ENCODE measurements at regions of chr3 and their contacts with region 1.

Region 1: DNA sequence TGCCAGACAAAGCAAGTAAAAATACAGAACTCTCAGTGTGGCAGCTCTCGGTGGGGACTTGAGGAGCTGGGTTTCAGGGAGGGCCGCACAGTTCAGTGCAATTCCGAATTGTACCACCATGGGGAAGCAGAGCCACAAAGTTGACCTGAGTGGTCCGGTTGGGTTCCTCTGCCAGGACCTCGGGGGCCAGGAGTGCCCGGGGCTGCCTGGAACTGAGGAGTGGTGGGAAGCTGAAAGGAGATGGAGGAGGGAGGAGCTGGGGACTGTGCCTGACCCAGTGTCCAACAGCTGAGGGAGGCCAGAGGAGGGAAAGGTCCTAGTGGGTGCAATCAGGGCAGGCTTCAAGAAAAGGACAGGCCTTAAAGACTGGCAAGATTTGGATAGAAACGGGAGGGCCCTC is 32.2 kb upstream of the TRH start:
- DNase-seq: peak; percentile 43 to 66 (median 57)
- ATAC-seq: peak; percentile 85 to 94 (median 87)
- H3K4me3 ChIP-seq: no peak overlapping the region
- H3K27ac ChIP-seq: no peak overlapping the region
- H3K4me1 ChIP-seq: peaks cover 0 to 3% (median 0%) of the 10 kb centered on the region in 12 donors
- H3K27me3 ChIP-seq: peaks cover 0 to 2% (median 0%) of the 10 kb centered on the region in 9 donors
- CTCF ChIP-seq: peak; percentile 62 to 76 (median 69)
- POLR2A ChIP-seq: no peak

Region 2: GRCh38 chr3:129195731-129196256 is 746.5 kb before region 1 on chr3:
- intact Hi-C with region 1: no loop called
- DNase-seq: peak in 4 of 5 donors; percentile 63 to 78 (median 64)
- ATAC-seq: peak; percentile 97
- H3K4me3 ChIP-seq: peak overlapping the region in 1 of 12 donors; percentile 10
- H3K27ac ChIP-seq: peak overlapping the region; percentile 78 to 95 (median 88)
- H3K4me1 ChIP-seq: peaks cover 12 to 39% (median 29%) of the 10 kb centered on the region in 12 donors
- H3K27me3 ChIP-seq: no peaks in the 10 kb centered on the region
- CTCF ChIP-seq: no peak
- POLR2A ChIP-seq: peak in 1 of 2 donors; percentile 25

Region 3: DNA sequence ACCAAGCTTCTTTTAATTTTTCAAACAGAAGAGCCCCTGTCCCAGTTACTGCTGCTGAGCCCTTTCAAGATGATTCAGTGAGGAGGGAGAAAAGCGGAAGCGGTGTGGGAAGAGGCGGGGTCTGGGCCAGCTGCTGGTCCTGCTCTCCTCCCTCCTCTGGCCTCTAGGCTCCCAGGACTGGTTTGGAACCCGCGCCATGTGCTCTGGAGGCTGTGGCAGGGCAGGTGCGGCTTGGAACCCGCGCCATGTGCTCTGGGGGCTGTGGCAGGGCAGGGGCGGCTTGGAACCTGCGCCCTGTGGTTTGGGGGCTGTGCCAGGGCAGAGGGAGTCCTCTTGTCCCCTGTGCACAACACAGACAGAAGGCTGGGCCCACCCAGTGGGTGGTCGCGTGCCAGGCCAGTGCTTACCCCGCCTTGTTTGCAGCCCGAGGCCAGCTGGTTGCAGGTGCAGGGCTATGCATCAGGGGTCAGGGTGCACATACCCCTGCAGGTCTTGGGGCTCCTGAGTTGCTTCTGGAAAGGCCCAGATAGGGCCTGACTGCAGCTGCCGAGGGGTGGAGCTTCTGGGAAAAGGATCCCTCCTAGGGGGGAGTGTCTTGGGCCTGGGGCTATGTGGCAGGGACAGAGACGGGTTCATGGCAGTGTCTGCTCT is 151.6 kb after region 1 on chr3:
- intact Hi-C with region 1: loop called in 5 of 10 experiments (anchors 2 to 10 kb)
- DNase-seq: no peak
- ATAC-seq: no peak
- H3K4me3 ChIP-seq: peak overlapping the region in 1 of 12 donors; percentile 28
- H3K27ac ChIP-seq: no peak overlapping the region
- H3K4me1 ChIP-seq: peaks cover 0 to 19% (median 0%) of the 10 kb centered on the region in 12 donors
- H3K27me3 ChIP-seq: no peaks in the 10 kb centered on the region
- CTCF ChIP-seq: no peak
- POLR2A ChIP-seq: no peak

Region 4: DNA sequence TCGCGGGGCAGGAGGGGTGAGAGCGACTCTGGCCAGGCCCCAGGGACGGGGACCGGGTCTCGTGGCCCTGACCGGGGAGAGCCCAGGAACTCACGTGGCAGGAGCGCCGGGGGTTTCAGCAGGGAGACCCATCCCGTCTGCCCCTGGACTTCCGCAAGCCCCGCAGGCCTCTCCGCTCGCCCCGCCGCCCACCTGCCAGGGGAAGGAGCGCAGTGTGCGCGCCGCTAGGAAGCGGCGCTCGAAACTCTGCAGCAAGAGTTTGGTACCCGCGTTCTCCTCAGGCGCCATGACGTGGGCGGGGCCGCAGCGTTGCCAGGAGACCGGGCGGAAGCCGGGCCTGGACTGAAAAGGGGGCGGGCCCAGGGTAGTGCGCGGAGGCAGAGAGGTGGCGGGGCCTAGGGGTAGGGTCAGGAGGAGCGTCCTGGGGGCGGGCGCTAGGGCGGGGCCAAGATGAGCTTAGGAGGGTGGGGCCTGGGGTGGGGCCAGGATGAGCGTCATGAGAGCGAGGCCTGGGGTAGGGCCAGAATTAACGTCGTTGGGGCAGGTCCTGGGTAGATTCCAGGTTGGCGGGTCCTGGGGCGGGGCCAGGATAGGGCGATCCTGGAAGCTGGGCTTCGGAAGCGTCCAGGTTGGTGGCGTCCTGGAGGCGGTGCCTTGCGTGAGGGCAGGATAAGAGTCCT is 169.0 kb after region 1 on chr3:
- intact Hi-C with region 1: loop called in 4 of 10 experiments (anchors 5 to 10 kb)
- DNase-seq: peak; percentile 99 to 100 (median 99)
- ATAC-seq: peak; percentile 100
- H3K4me3 ChIP-seq: peak overlapping the region; percentile 33 to 98 (median 77)
- H3K27ac ChIP-seq: peak overlapping the region in 11 of 12 donors; percentile 17 to 90 (median 78)
- H3K4me1 ChIP-seq: peaks cover 0 to 17% (median 4%) of the 10 kb centered on the region in 12 donors
- H3K27me3 ChIP-seq: no peaks in the 10 kb centered on the region
- CTCF ChIP-seq: no peak
- POLR2A ChIP-seq: peak in 1 of 2 donors; percentile 29

Region 5: GRCh38 chr3:130516645-130517512 is 574.6 kb after region 1 on chr3 and contains the start of gene COL6A6:
- intact Hi-C with region 1: no loop called
- DNase-seq: no peak
- ATAC-seq: peak in 1 of 4 donors; percentile 54
- H3K4me3 ChIP-seq: peak within 1 kb of the TSS; percentile 8 to 50 (median 32)
- H3K27ac ChIP-seq: peak within 1 kb of the TSS in 2 of 12 donors; percentile 32 to 43
- H3K4me1 ChIP-seq: peaks cover 0 to 6% (median 0%) of the 10 kb centered on the region in 12 donors
- H3K27me3 ChIP-seq: peaks cover 4 to 59% (median 34%) of the 10 kb centered on the region in 9 donors
- CTCF ChIP-seq: no peak
- POLR2A ChIP-seq: no peak
- total RNA-seq, gene COL6A6: 0.26 to 4.5 (median 1.00) TPM